ENCODE measurements at regions of chr9 and their contacts with region 1.

Region 1: DNA sequence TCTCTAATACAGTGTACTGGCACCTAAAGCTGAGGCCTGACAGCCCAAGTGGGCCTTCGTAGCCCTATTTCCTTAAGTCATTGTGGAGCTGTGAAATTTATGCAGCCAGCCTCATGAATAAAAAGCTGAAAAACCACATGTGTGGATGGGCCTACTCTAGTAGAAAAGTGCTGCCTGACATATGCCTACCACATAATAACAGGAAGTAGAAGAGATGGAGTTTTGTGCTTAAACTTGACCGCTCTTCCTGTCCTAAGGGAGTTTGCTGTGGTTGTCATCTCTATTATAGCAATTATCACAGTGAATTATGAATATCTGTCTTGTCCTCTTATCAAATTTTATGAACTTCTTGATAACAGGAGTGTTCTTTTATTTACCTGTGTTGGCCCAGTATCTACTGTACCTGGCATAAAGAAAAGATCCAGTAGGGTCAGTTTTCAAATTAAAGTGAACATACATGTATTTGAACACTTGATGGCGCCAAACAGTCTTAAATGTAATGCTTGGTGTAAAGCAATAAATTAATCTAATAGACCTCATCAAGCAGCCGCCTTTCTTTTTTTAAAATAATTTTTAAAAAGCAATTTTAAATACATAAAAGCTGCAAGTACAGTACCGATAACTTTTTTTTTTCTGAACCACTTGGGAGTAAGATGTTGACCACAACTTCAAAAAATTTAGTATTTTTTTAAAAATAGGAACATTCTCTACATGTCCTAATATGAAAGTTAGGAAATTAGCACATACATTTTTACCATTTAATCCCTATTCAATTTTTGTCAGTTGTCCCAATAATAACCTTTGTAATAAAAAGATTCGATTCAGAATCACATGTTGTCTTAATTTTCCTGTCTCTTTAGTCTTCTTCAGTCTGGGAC is 51.0 kb downstream of the FKTN start:
- DNase-seq: peak; percentile 59
- ATAC-seq: peak; percentile 73
- H3K4me3 ChIP-seq: no peak overlapping the region
- H3K27ac ChIP-seq: no peak overlapping the region
- H3K4me1 ChIP-seq: no peaks in the 10 kb centered on the region
- H3K27me3 ChIP-seq: no peaks in the 10 kb centered on the region
- CTCF ChIP-seq: peak; percentile 61
- POLR2A ChIP-seq: no peak
- RAD21 ChIP-seq: peak; percentile 60

Region 2: DNA sequence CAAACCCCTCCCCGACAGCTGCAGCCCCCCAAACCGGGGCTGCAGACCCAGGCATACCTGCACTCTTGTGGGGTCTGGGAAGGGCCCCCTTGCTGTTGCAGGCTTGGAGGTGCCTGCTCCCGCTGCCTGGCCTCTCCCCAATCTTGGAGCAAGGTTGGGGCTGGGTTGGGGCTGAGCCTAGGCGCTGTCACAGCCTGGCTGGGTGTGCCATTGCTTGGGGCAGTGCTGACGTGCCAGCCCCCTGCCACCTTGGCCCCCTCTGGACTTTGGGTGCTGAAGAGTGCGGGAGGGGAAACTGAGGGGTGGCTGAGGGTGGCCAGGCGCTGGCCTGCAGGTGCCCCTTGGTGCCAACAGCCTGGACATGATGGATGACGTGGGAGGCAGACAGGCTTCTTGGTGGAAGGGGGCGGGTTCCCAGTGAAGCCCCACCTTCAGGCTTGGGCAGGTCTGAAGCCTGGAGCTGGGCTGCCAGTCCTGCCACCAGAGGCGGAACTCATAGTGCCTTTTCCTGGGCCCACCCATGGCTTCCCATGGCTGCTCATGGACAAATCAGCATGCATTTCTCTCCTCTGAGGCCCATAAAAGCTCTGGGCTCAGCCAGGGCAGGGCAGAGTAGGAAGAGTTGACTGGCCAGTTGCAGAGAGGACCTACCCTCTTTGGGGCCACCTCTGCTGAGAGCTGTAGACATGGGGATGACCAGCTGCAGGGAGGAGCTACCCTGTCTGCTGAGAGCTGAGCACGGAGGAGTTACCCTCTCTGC is 104.5 kb after region 1 on chr9:
- CTCF ChIA-PET with region 1: interaction called, 3 read pairs
- POLR2A ChIA-PET with region 1: no interaction called
- dilution Hi-C with region 1: no loop called
- in situ Hi-C with region 1: no loop called
- intact Hi-C with region 1: loop called (anchors 2 kb)
- DNase-seq: no peak
- ATAC-seq: no peak
- H3K4me3 ChIP-seq: no peak overlapping the region
- H3K27ac ChIP-seq: no peak overlapping the region
- H3K4me1 ChIP-seq: no peaks in the 10 kb centered on the region
- H3K27me3 ChIP-seq: no peaks in the 10 kb centered on the region
- CTCF ChIP-seq: no peak
- POLR2A ChIP-seq: no peak
- RAD21 ChIP-seq: no peak

Region 3: GRCh38 chr9:105881654-105882349 is 272.8 kb after region 1 on chr9:
- CTCF ChIA-PET with region 1: no interaction called
- POLR2A ChIA-PET with region 1: no interaction called
- dilution Hi-C with region 1: no loop called
- in situ Hi-C with region 1: no loop called
- intact Hi-C with region 1: loop called (anchors 1 kb)
- DNase-seq: peak; percentile 53
- ATAC-seq: peak; percentile 72
- H3K4me3 ChIP-seq: no peak overlapping the region
- H3K27ac ChIP-seq: no peak overlapping the region
- H3K4me1 ChIP-seq: no peaks in the 10 kb centered on the region
- H3K27me3 ChIP-seq: no peaks in the 10 kb centered on the region
- CTCF ChIP-seq: peak; percentile 68
- POLR2A ChIP-seq: no peak
- RAD21 ChIP-seq: peak; percentile 51